ENCODE measurements at regions of chr17 and their contacts with region 1.

Region 1: GRCh38 chr17:40782450-40782849 is at the start of gene KRT27:
- DNase-seq: no peak
- ATAC-seq: no peak
- H3K4me3 ChIP-seq: no peak within 1 kb of the TSS
- H3K27ac ChIP-seq: no peak within 1 kb of the TSS
- H3K4me1 ChIP-seq: no peaks in the 10 kb centered on the region
- H3K27me3 ChIP-seq: peaks cover 0 to 37% (median 17%) of the 10 kb centered on the region in 9 donors
- CTCF ChIP-seq: no peak
- POLR2A ChIP-seq: no peak
- total RNA-seq, gene KRT27: not detected

Region 2: GRCh38 chr17:40659911-40660310 is 122.5 kb before region 1 on chr17:
- intact Hi-C with region 1: loop called in 1 of 10 experiments (anchors 10 kb)
- DNase-seq: no peak
- ATAC-seq: no peak
- H3K4me3 ChIP-seq: no peak overlapping the region
- H3K27ac ChIP-seq: no peak overlapping the region
- H3K4me1 ChIP-seq: peaks cover 0 to 2% (median 0%) of the 10 kb centered on the region in 12 donors
- H3K27me3 ChIP-seq: peaks cover 0 to 18% (median 1%) of the 10 kb centered on the region in 9 donors
- CTCF ChIP-seq: no peak
- POLR2A ChIP-seq: no peak

Region 3: DNA sequence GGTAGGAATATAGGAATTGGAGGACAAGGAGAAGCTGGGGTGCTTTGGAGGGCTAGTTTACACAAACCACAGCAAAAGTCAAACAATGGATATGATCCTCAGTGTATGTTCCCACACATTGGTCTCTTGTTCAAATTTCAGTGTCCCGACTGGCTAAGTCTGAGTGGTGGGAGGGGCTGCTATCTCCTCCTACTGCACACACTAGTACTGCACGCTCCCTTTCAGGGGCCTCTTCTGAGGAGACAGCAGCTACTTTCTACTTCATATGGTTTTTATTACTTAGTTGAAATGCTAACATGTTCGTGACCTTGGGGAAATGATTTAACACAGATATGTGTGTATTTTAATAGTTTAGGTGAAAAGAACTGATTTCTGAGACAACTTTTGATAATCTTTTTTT is 58.8 kb after region 1 on chr17:
- intact Hi-C with region 1: no loop called
- DNase-seq: no peak
- ATAC-seq: no peak
- H3K4me3 ChIP-seq: no peak overlapping the region
- H3K27ac ChIP-seq: no peak overlapping the region
- H3K4me1 ChIP-seq: no peaks in the 10 kb centered on the region
- H3K27me3 ChIP-seq: no peaks in the 10 kb centered on the region
- CTCF ChIP-seq: no peak
- POLR2A ChIP-seq: no peak

Measured in heart left ventricle (tissue), 16 donors.